ENCODE measurements at regions of chrX and their contacts with region 1.

Region 1: DNA sequence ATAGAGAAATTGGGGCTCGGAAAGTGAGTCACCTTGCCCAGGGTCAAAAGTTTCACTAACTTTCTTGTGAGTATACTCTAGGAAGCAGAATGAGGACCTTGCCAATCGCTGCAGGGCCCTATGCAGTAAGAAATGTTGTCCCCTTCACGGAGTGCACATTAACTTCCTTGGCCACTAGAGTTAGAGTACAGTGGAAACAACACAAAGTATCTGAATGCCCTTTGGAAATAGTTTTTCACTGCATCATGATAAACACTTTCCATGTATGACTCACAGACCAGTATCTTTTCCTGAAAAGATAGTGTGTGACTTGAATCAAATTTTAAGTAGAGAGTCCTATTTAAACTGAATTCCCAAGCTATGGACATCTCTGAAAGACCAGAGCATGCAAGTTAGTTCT is 45.5 kb upstream of the STK26 start:
- DNase-seq: no peak
- ATAC-seq: no peak
- H3K4me3 ChIP-seq: no peak overlapping the region
- H3K4me3 Mint-ChIP-seq: no peak overlapping the region
- H3K27ac ChIP-seq: no peak overlapping the region
- H3K27ac Mint-ChIP-seq: no peak overlapping the region
- H3K4me1 ChIP-seq: peaks cover 6% of the 10 kb centered on the region
- H3K4me1 Mint-ChIP-seq: peaks cover 21% of the 10 kb centered on the region
- H3K27me3 ChIP-seq: no peaks in the 10 kb centered on the region
- H3K27me3 Mint-ChIP-seq: no peaks in the 10 kb centered on the region
- CTCF ChIP-seq: no peak

Region 2: DNA sequence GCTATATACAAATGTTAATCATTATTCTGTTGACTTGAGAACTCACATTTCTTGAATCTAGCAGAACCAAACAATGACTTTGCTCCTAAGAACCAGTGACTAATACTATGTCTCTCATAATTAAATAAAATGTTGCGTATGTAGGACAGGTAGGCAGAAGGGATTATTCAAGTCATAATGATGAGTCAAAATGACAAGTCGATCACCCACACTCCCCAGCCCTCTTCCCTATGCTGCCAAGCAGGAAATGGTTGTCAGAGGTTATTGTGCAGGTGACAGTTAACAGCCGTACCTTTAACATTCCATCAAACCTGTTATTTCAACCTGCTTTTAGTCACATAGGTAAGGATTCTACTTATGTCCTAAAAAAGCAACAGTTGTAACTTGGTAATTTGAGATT is 23.5 kb after region 1 on chrX:
- CTCF ChIA-PET with region 1: no interaction called
- POLR2A ChIA-PET with region 1: no interaction called
- intact Hi-C with region 1: loop called in 1 of 2 experiments (anchors 1 kb)
- DNase-seq: peak in 1 of 9 experiments; percentile 3
- ATAC-seq: peak; percentile 70
- H3K4me3 ChIP-seq: no peak overlapping the region
- H3K4me3 Mint-ChIP-seq: no peak overlapping the region
- H3K27ac ChIP-seq: no peak overlapping the region
- H3K27ac Mint-ChIP-seq: no peak overlapping the region
- H3K4me1 ChIP-seq: peaks cover 6% of the 10 kb centered on the region
- H3K4me1 Mint-ChIP-seq: peaks cover 18% of the 10 kb centered on the region
- H3K27me3 ChIP-seq: no peaks in the 10 kb centered on the region
- H3K27me3 Mint-ChIP-seq: no peaks in the 10 kb centered on the region
- CTCF ChIP-seq: no peak